Naive thymus-derived CD4-positive, alpha-beta T cell (primary cell): ENCODE measurements at regions of chr9 and their contacts with region 1.

Region 1: DNA sequence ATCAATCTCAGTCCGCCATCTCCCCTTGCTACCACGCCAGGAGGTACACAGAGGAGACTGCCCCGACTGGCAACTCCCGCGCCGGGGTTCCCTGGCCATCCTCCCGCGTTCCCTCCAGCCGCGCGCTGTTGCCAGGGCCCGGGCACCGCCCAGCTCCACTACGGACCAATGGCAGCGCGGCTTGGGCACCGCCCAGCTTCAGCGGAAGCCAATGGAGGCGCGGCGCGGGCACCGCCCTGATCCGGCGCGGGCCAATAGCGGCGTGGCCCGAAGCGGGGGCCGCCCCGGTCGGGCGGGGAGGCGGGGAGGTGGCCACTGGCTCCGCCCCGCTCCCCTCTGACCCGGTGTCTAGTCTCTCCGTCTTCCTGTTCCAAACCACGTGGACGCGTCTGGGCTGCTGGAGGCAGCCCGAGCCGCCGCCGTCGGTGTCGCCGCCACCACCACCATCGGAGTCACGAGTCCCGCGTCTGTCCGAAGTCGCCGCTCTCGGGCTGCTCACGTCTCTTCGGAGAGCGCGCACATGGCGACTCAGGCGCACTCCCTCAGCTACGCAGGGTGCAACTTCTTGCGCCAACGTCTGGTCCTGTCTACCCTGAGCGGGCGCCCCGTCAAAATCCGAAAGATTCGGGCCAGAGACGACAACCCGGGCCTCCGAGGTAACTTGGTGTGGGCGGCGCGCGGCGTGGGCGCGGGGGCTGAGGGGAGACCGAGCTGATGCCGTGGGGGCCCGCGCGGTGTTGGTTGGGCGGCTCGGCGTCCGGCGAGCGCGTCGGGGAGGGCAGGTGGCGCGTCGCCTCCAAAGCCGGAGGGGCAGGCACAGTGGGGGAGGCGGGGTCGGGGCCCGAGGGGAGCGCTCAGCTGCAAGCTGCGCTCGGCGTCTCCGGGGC is at the start of gene RCL1:
- DNase-seq: peak; percentile 93 to 98 (median 97)
- ATAC-seq: peak; percentile 96
- H3K4me3 ChIP-seq: peak within 1 kb of the TSS; percentile 99
- H3K4me3 Mint-ChIP-seq: peak within 1 kb of the TSS; percentile 83 to 97 (median 94)
- H3K27ac ChIP-seq: peak within 1 kb of the TSS; percentile 80
- H3K27ac Mint-ChIP-seq: peak within 1 kb of the TSS; percentile 71 to 97 (median 94)
- H3K4me1 ChIP-seq: peaks cover 4 to 18% of the 10 kb centered on the region in 2 donors
- H3K4me1 Mint-ChIP-seq: peaks cover 21 to 56% (median 45%) of the 10 kb centered on the region in 7 donors
- H3K27me3 ChIP-seq: no peaks in the 10 kb centered on the region
- H3K27me3 Mint-ChIP-seq: peaks cover 0 to 11% (median 0%) of the 10 kb centered on the region in 5 donors
- total RNA-seq, gene RCL1: 21.5 to 39.4 (median 23.4) TPM

Region 2: DNA sequence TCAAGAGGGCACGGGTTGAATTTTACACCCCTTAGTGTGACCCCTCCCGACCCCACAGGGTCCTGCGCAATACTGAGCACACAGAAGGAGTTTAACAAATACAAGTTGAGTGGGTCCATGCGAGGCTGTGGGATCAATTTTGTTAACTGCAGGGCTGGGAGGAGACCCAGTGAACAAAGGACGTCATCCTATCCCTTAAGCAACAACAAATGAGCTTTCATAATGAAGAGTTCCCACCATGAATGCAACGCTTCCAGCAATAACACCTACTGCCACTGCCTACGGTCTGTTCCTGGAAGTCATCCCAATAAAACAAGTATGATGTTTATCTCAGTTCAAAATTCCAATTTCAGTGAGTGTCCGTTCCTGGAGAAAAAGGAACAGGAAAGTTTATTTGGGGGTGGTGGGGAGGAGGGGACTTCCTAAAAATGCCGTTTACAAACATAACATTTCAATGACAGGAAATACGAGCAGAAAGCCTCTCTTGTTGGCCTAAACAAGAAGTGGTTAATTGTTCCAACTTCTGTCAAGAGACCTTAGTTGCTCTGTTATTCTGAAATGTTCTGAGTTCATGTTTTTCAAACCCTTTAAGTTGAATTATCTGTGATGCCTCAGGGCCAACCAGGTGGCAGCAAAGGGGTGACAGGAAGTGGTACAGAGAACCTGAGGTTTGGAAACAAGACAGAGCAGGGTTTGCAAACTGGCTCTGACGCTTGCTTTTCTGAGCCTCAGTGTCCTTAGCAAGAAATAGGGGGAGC is 196.5 kb before region 1 on chr9:
- CTCF ChIA-PET with region 1: no interaction called
- POLR2A ChIA-PET with region 1: no interaction called
- intact Hi-C with region 1: loop called in 1 of 2 experiments (anchors 2 kb)
- DNase-seq: peak in 7 of 9 donors; percentile 81 to 94 (median 91)
- ATAC-seq: peak; percentile 95
- H3K4me3 ChIP-seq: peak overlapping the region; percentile 13
- H3K4me3 Mint-ChIP-seq: peak overlapping the region; percentile 29 to 80 (median 68)
- H3K27ac ChIP-seq: peak overlapping the region; percentile 74
- H3K27ac Mint-ChIP-seq: peak overlapping the region; percentile 58 to 99 (median 97)
- H3K4me1 ChIP-seq: peaks cover 30 to 53% of the 10 kb centered on the region in 2 donors
- H3K4me1 Mint-ChIP-seq: peaks cover 32 to 76% (median 60%) of the 10 kb centered on the region in 7 donors
- H3K27me3 ChIP-seq: no peaks in the 10 kb centered on the region
- H3K27me3 Mint-ChIP-seq: peaks cover 0 to 5% (median 0%) of the 10 kb centered on the region in 5 donors

Region 3: GRCh38 chr9:4740638-4741364 is 52.0 kb before region 1 on chr9 and contains the start of gene AK3:
- CTCF ChIA-PET with region 1: interaction called, 3 read pairs
- POLR2A ChIA-PET with region 1: interaction called, 20 read pairs
- intact Hi-C with region 1: loop called (anchors 1 kb)
- DNase-seq: peak; percentile 72 to 85 (median 83)
- ATAC-seq: peak; percentile 95
- H3K4me3 ChIP-seq: peak within 1 kb of the TSS; percentile 73
- H3K4me3 Mint-ChIP-seq: peak within 1 kb of the TSS; percentile 88 to 99 (median 94)
- H3K27ac ChIP-seq: peak within 1 kb of the TSS; percentile 86
- H3K27ac Mint-ChIP-seq: peak within 1 kb of the TSS; percentile 86 to 98 (median 93)
- H3K4me1 ChIP-seq: peaks cover 10 to 16% of the 10 kb centered on the region in 2 donors
- H3K4me1 Mint-ChIP-seq: peaks cover 22 to 49% (median 40%) of the 10 kb centered on the region in 7 donors
- H3K27me3 ChIP-seq: no peaks in the 10 kb centered on the region
- H3K27me3 Mint-ChIP-seq: no peaks in the 10 kb centered on the region
- total RNA-seq, gene AK3: 18.0 to 34.8 (median 25.8) TPM

Region 4: GRCh38 chr9:4832786-4833579 is 40.2 kb after region 1 on chr9:
- CTCF ChIA-PET with region 1: no interaction called
- POLR2A ChIA-PET with region 1: no interaction called
- intact Hi-C with region 1: loop called in 1 of 2 experiments (anchors 5 kb)
- DNase-seq: peak in 1 of 9 donors; percentile 56
- ATAC-seq: no peak
- H3K4me3 ChIP-seq: no peak overlapping the region
- H3K4me3 Mint-ChIP-seq: no peak overlapping the region
- H3K27ac ChIP-seq: no peak overlapping the region
- H3K27ac Mint-ChIP-seq: peak overlapping the region in 2 of 9 donors; percentile 37 to 80
- H3K4me1 ChIP-seq: no peaks in the 10 kb centered on the region
- H3K4me1 Mint-ChIP-seq: peaks cover 0 to 46% (median 9%) of the 10 kb centered on the region in 7 donors
- H3K27me3 ChIP-seq: no peaks in the 10 kb centered on the region
- H3K27me3 Mint-ChIP-seq: no peaks in the 10 kb centered on the region

Region 5: DNA sequence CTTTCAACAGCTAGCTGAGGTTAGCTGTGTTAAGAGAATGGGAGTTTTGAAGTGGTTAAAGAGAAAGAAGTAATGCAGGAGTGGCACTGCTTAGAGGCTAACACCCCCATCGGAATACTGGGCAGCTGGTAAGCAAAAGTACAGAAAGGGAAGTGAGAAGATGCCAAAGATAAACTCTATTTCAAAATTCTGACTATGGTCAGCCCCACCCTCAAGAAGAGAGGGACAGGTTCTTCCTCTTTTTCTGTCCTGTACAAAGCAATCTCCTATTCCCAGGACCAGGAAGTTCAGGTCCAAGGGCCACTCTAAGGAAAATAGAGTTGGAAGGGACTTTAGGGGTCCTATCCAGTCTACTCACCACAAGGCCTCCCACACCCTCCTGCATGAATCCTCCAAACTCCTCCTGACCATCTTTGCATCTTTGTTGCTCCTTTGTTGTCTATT is 146.3 kb after region 1 on chr9:
- CTCF ChIA-PET with region 1: no interaction called
- POLR2A ChIA-PET with region 1: no interaction called
- intact Hi-C with region 1: loop called in 1 of 2 experiments (anchors 2 kb)
- DNase-seq: peak in 2 of 9 donors; percentile 2 to 24
- ATAC-seq: peak; percentile 88
- H3K4me3 ChIP-seq: no peak overlapping the region
- H3K4me3 Mint-ChIP-seq: peak overlapping the region in 7 of 10 donors; percentile 2 to 56 (median 29)
- H3K27ac ChIP-seq: no peak overlapping the region
- H3K27ac Mint-ChIP-seq: peak overlapping the region in 4 of 9 donors; percentile 7 to 80 (median 24)
- H3K4me1 ChIP-seq: peaks cover 16 to 21% of the 10 kb centered on the region in 2 donors
- H3K4me1 Mint-ChIP-seq: peaks cover 30 to 66% (median 38%) of the 10 kb centered on the region in 7 donors
- H3K27me3 ChIP-seq: no peaks in the 10 kb centered on the region
- H3K27me3 Mint-ChIP-seq: no peaks in the 10 kb centered on the region

Region 6: DNA sequence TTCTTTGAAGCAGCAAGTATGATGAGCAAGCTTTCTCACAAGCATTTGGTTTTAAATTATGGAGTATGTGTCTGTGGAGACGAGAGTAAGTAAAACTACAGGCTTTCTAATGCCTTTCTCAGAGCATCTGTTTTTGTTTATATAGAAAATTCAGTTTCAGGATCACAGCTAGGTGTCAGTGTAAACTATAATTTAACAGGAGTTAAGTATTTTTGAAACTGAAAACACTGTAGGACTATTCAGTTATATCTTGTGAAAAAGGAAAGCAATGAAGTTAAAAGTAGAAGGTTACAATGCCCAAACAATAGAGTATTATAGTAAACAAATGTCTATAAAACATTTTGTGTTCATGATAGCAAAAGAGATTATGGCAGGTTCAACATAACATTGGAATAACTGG is 280.9 kb after region 1 on chr9:
- CTCF ChIA-PET with region 1: no interaction called
- POLR2A ChIA-PET with region 1: no interaction called
- intact Hi-C with region 1: no loop called
- DNase-seq: no peak
- ATAC-seq: no peak
- H3K4me3 ChIP-seq: no peak overlapping the region
- H3K4me3 Mint-ChIP-seq: no peak overlapping the region
- H3K27ac ChIP-seq: no peak overlapping the region
- H3K27ac Mint-ChIP-seq: peak overlapping the region in 1 of 9 donors; percentile 10
- H3K4me1 ChIP-seq: no peaks in the 10 kb centered on the region
- H3K4me1 Mint-ChIP-seq: peaks cover 0 to 26% (median 0%) of the 10 kb centered on the region in 7 donors
- H3K27me3 ChIP-seq: no peaks in the 10 kb centered on the region
- H3K27me3 Mint-ChIP-seq: no peaks in the 10 kb centered on the region

Region 7: GRCh38 chr9:5450359-5451091 is 657.7 kb after region 1 on chr9 and contains the start of gene CD274:
- CTCF ChIA-PET with region 1: interaction called, 3 read pairs
- POLR2A ChIA-PET with region 1: no interaction called
- intact Hi-C with region 1: loop called in 1 of 2 experiments (anchors 1 kb)
- DNase-seq: peak; percentile 61 to 89 (median 80)
- ATAC-seq: peak; percentile 95
- H3K4me3 ChIP-seq: peak within 1 kb of the TSS; percentile 78
- H3K4me3 Mint-ChIP-seq: peak within 1 kb of the TSS; percentile 92 to 98 (median 95)
- H3K27ac ChIP-seq: peak within 1 kb of the TSS; percentile 94
- H3K27ac Mint-ChIP-seq: peak within 1 kb of the TSS; percentile 97 to 99 (median 98)
- H3K4me1 ChIP-seq: peaks cover 0 to 11% of the 10 kb centered on the region in 2 donors
- H3K4me1 Mint-ChIP-seq: peaks cover 33 to 69% (median 62%) of the 10 kb centered on the region in 7 donors
- H3K27me3 ChIP-seq: no peaks in the 10 kb centered on the region
- H3K27me3 Mint-ChIP-seq: no peaks in the 10 kb centered on the region
- total RNA-seq, gene CD274: 2.9 to 38.7 (median 7.8) TPM